Calu3 (cell line): ENCODE measurements at regions of chr10 and their contacts with region 1.

Region 1: GRCh38 chr10:102641880-102642735 is 2.2 kb upstream of the TRIM8 start:
- DNase-seq: peak; percentile 94
- H3K4me3 Mint-ChIP-seq: peak overlapping the region; percentile 90
- H3K27ac Mint-ChIP-seq: peak overlapping the region; percentile 85
- H3K4me1 Mint-ChIP-seq: peaks cover 21% of the 10 kb centered on the region
- H3K27me3 Mint-ChIP-seq: no peaks in the 10 kb centered on the region
- CTCF ChIP-seq: no peak

Region 2: GRCh38 chr10:102523250-102524029 is 118.7 kb before region 1 on chr10:
- CTCF ChIA-PET with region 1: no interaction called
- intact Hi-C with region 1: no loop called
- DNase-seq: no peak
- H3K4me3 Mint-ChIP-seq: no peak overlapping the region
- H3K27ac Mint-ChIP-seq: no peak overlapping the region
- H3K4me1 Mint-ChIP-seq: peaks cover 6% of the 10 kb centered on the region
- H3K27me3 Mint-ChIP-seq: no peaks in the 10 kb centered on the region
- CTCF ChIP-seq: no peak

Region 3: DNA sequence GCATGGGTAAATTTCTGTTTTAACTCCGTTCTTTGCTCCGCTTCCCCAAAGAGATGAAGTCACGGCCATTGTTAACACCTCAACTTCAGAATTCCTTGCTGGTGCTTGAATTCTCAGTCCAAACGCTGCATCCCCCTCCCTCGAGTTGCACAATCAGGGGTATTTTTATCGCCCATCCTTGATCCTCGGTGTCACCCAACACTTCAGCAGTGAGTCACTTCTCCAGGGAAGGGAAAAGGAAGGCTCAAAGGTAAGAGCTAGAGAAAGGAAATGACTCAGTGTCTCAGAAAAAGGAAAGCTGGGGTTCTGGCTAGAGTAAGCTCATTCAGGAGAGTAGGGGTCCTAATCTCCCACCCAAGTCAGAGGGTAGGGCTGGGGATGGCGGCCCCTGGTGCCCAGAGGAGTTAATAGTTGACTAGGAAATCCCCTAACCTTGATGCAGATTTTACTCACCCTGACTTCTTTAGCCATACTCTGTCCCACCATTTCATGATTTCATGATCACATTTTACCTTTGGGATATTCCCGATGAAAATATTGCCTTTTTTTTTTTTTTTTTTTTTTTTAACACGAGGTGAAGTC is 37.6 kb before region 1 on chr10:
- CTCF ChIA-PET with region 1: interaction called, 3 read pairs
- intact Hi-C with region 1: loop called (anchors 2 kb)
- DNase-seq: peak; percentile 27
- H3K4me3 Mint-ChIP-seq: no peak overlapping the region
- H3K27ac Mint-ChIP-seq: peak overlapping the region; percentile 48
- H3K4me1 Mint-ChIP-seq: peaks cover 26% of the 10 kb centered on the region
- H3K27me3 Mint-ChIP-seq: no peaks in the 10 kb centered on the region
- CTCF ChIP-seq: no peak

Region 4: GRCh38 chr10:102704915-102705314 is 62.8 kb after region 1 on chr10:
- CTCF ChIA-PET with region 1: no interaction called
- intact Hi-C with region 1: no loop called
- DNase-seq: no peak
- H3K4me3 Mint-ChIP-seq: no peak overlapping the region
- H3K27ac Mint-ChIP-seq: no peak overlapping the region
- H3K4me1 Mint-ChIP-seq: peaks cover 10% of the 10 kb centered on the region
- H3K27me3 Mint-ChIP-seq: no peaks in the 10 kb centered on the region
- CTCF ChIP-seq: no peak